GM23248 (cell line): ENCODE measurements at regions of chr2 and their contacts with region 1.

Region 1: GRCh38 chr2:171703574-171704347 is 16.5 kb downstream of the DYNC1I2 start:
- DNase-seq: peak; percentile 71
- H3K4me3 ChIP-seq: no peak overlapping the region
- H3K27ac ChIP-seq: 0 out of 2 replicates have a peak overlapping the region, but pooled peaks have one; percentile 17
- H3K4me1 ChIP-seq: peaks cover 24% of the 10 kb centered on the region
- H3K27me3 ChIP-seq: no peaks in the 10 kb centered on the region

Region 2: GRCh38 chr2:172013396-172013795 is 309.6 kb after region 1 on chr2:
- in situ Hi-C with region 1: no loop called
- DNase-seq: no peak
- H3K4me3 ChIP-seq: no peak overlapping the region
- H3K27ac ChIP-seq: no peak overlapping the region
- H3K4me1 ChIP-seq: peaks cover 6% of the 10 kb centered on the region; the same call in 1 of the 2 replicates
- H3K27me3 ChIP-seq: no peaks in the 10 kb centered on the region

Region 3: GRCh38 chr2:172128484-172128883 is 424.7 kb after region 1 on chr2:
- in situ Hi-C with region 1: loop called (anchors 10 kb)
- DNase-seq: no peak
- H3K4me3 ChIP-seq: no peak overlapping the region
- H3K27ac ChIP-seq: no peak overlapping the region
- H3K4me1 ChIP-seq: no peaks in the 10 kb centered on the region
- H3K27me3 ChIP-seq: no peaks in the 10 kb centered on the region

Region 4: GRCh38 chr2:172261292-172261691 is 557.5 kb after region 1 on chr2:
- in situ Hi-C with region 1: no loop called
- DNase-seq: peak; percentile 40
- H3K4me3 ChIP-seq: no peak overlapping the region
- H3K27ac ChIP-seq: no peak overlapping the region
- H3K4me1 ChIP-seq: peaks cover 20% of the 10 kb centered on the region
- H3K27me3 ChIP-seq: no peaks in the 10 kb centered on the region